Motor neuron (in vitro differentiated cells): ENCODE measurements at regions of chr13 and their contacts with region 1.

Region 1: GRCh38 chr13:73835138-73835721 is 299.0 kb downstream of the KLF12 start:
- ATAC-seq: peak in 5 of 8 experiments; percentile 31 to 72 (median 45)
- H3K4me3 ChIP-seq: no peak overlapping the region
- H3K27ac ChIP-seq: no peak overlapping the region
- H3K4me1 ChIP-seq: peaks cover 15 to 35% of the 10 kb centered on the region in 2 donors

Region 2: GRCh38 chr13:72677431-72677830 is 1157.8 kb before region 1 on chr13:
- in situ Hi-C with region 1: no loop called
- ATAC-seq: no peak
- H3K4me3 ChIP-seq: no peak overlapping the region
- H3K27ac ChIP-seq: no peak overlapping the region
- H3K4me1 ChIP-seq: no peaks in the 10 kb centered on the region

Region 3: DNA sequence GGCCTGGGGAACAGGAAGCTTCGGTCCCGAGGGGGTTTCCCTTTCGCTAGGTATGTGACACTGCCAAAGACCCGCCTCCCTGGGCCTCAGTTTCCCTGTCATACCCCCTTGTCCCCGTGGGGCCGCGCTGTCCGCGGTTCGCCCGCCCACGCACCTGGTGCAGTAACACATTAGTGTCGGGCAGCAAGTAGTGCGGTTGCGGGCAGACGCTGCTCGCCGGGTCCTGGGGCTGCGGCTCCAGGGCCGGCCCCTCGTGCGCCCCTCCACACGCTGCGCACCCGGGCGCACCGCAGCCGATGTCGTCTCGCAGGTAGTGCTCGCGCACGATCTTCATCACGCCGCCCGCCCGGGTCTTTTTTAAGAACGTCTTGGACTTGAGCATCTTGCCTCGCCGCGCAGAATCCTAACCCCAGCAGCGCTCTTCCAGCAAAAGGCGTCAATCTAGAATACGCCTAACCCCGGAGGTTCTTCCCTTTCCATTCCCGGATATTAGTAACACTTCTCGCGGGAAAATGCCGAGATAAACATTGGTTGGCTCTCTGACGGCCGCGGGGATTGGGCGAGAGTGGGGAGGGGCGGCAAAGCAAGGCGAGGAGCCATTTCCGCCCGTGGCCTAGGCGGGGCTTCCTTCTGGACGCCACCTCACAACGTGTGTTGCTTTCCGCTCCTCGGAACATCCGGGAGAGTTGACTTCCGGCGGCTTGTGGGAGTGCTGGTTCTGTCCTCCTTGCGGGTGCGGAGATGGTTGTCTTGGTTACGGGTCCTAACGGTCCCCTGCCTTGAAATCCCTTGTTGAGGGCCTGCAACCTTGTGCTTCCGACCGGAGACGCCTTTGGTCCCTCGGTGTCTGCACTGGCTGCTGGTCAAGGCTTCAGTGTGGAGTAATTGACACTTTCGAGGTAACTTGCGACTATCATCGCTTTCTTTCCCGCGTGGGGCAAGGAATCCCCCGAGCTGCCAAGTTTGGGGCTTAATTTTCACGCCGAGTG is 1053.5 kb before region 1 on chr13 and contains the starts of genes DIS3 and PIBF1:
- in situ Hi-C with region 1: no loop called
- ATAC-seq: peak; percentile 91 to 97 (median 97)
- H3K4me3 ChIP-seq: peak within 1 kb of the TSS; percentile 64 to 96 (median 91)
- H3K27ac ChIP-seq: peak within 1 kb of the TSS; percentile 92
- H3K4me1 ChIP-seq: peaks cover 18 to 35% of the 10 kb centered on the region in 2 donors
- total RNA-seq, gene DIS3: 23.7 to 38.0 (median 28.3) TPM
- total RNA-seq, gene PIBF1: 15.7 to 39.3 (median 23.6) TPM

Region 4: GRCh38 chr13:74133657-74134201 is 298.5 kb after region 1 on chr13:
- in situ Hi-C with region 1: loop called in 1 of 9 experiments (anchors 25 kb)
- ATAC-seq: peak; percentile 24 to 75 (median 70)
- H3K4me3 ChIP-seq: peak overlapping the region; percentile 66 to 87 (median 70)
- H3K27ac ChIP-seq: peak overlapping the region; percentile 91
- H3K4me1 ChIP-seq: peaks cover 16 to 23% of the 10 kb centered on the region in 2 donors

Region 5: DNA sequence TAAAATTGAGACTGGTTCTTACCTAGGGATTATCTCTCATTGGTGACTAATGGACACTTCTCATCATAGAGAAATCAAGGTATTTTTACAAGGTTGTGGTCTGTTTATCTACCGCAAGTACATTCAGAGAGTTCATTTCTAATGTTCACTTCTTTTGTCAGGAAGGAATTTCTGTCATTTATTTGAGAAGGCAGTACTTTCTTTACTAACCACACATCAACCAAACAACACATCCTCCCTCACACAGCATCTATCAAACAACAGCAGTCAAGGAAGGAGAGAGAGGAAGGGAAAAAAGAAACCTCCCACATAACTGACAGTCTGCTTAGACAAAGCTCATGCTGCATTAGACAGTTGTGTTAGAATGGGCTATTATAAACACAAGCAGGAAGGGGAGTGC is 481.3 kb after region 1 on chr13:
- in situ Hi-C with region 1: no loop called
- ATAC-seq: peak in 5 of 8 experiments; percentile 48 to 74 (median 72)
- H3K4me3 ChIP-seq: no peak overlapping the region
- H3K27ac ChIP-seq: no peak overlapping the region
- H3K4me1 ChIP-seq: no peaks in the 10 kb centered on the region